CD4-positive, alpha-beta T cell (primary cell): ENCODE measurements at regions of chr3 and their contacts with region 1.

Region 1: DNA sequence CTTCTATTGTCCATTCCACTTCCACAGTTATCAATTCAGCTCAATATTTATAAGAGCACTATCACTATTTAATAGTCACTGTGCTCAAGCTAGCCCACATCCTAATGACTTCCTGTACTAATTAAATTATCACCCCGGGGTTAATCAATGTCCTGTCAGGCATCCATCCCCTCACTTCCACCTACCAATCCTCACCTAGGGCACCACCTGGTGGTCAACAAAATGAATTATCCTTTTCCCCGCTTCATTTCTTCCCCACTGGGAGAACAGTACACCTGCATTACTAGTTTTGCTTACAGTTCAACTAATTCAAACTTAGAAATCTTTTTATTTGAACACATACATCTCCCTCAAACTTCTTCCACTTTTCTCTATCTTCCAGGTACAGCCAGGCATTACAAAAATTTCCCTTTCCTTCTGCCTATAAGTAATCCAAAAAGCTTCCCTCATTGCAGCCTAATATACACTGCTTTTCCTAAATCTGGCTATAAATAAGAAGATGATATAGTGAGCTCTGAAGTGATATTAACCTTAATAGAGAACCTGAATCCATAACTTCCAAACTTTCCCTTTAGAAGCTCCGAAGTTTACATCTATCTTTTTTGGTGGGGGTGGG is 68.5 kb downstream of the TMCC1 start:
- DNase-seq: peak in 12 of 14 experiments; percentile 2 to 76 (median 16)
- ATAC-seq: peak; percentile 62
- H3K4me3 ChIP-seq: no peak overlapping the region
- H3K4me3 Mint-ChIP-seq: no peak overlapping the region
- H3K27ac ChIP-seq: no peak overlapping the region
- H3K27ac Mint-ChIP-seq: no peak overlapping the region
- H3K4me1 ChIP-seq: peaks cover 7% of the 10 kb centered on the region
- H3K4me1 Mint-ChIP-seq: peaks cover 32% of the 10 kb centered on the region
- H3K27me3 ChIP-seq: no peaks in the 10 kb centered on the region
- H3K27me3 Mint-ChIP-seq: no peaks in the 10 kb centered on the region
- CTCF ChIP-seq: peak; percentile 71

Region 2: DNA sequence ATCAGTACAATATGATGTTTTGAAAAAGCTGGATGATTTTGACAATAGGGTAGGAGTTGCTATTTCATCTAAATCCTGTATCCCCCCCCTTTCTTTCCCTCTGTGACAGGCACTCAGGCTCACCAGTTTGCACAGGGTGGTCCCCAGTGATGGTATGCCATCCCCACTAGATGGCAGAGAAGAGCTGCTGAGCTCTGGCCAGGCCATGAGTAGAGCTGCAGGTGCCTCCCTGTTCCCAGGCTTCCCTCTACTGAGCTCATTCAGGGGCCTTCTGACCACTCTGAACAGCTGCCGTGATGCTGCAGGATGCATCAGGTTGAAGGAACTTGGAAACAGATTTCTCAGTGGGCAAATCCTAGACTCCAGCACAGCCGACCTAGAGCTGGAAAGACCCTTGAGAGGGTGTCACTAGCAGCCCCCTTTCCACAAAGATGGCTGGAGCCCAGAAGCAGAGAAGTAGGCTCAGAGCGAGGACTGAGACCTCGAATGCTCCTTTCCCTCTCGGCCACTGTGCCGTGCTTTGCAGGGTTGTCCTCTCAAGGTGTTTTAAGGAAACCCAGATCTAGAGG is 441.7 kb before region 1 on chr3:
- CTCF ChIA-PET with region 1: interaction called, 3 read pairs
- POLR2A ChIA-PET with region 1: no interaction called
- intact Hi-C with region 1: loop called (anchors 2 kb)
- DNase-seq: peak; percentile 11 to 64 (median 30)
- ATAC-seq: peak; percentile 92
- H3K4me3 ChIP-seq: no peak overlapping the region
- H3K4me3 Mint-ChIP-seq: no peak overlapping the region
- H3K27ac ChIP-seq: no peak overlapping the region
- H3K27ac Mint-ChIP-seq: no peak overlapping the region
- H3K4me1 ChIP-seq: no peaks in the 10 kb centered on the region
- H3K4me1 Mint-ChIP-seq: no peaks in the 10 kb centered on the region
- H3K27me3 ChIP-seq: no peaks in the 10 kb centered on the region
- H3K27me3 Mint-ChIP-seq: no peaks in the 10 kb centered on the region
- CTCF ChIP-seq: peak; percentile 68

Region 3: DNA sequence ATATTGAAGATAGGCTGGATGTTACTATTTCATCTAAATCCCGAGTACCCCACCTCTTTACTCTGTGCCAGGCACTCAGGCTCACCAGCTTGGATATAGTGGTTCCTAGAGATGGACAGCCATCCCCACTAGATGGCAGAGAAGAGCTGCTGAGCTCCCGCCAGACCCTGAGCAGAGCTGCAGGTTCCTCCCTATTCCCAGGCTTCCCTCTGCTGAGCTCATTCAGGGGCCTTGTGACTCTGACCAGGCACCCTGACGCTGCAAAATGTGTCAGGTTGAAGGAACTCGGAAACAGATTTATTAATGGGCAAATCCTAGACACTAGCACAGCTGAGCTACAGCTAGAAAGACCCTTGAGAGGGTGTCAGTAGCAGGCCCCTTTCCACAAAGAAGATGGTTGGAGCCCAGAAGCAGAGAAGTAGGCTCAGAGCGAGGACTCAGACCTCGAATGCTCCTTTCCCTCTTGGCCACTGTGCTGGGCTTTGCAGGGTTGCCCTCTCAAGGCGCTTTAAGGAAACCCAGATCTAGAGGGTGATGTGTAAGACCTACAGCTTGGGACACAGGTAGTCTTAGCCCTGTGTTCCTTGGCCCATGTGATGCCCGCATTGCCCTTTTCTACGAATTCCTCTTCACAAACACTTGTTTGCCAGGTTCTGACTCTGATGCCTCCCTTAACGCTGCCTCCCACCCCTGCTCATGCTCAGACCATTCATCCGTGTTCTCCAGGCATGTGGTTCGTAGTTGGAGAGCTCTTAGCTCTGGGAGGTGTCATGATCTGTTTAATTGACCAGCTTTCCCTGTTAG is 334.6 kb before region 1 on chr3:
- CTCF ChIA-PET with region 1: interaction called, 6 read pairs
- POLR2A ChIA-PET with region 1: interaction called, 3 read pairs
- intact Hi-C with region 1: loop called (anchors 1 to 2 kb)
- DNase-seq: peak; percentile 22 to 83 (median 42)
- ATAC-seq: peak; percentile 98
- H3K4me3 ChIP-seq: no peak overlapping the region
- H3K4me3 Mint-ChIP-seq: no peak overlapping the region
- H3K27ac ChIP-seq: no peak overlapping the region
- H3K27ac Mint-ChIP-seq: no peak overlapping the region
- H3K4me1 ChIP-seq: peaks cover 6% of the 10 kb centered on the region
- H3K4me1 Mint-ChIP-seq: no peaks in the 10 kb centered on the region
- H3K27me3 ChIP-seq: no peaks in the 10 kb centered on the region
- H3K27me3 Mint-ChIP-seq: no peaks in the 10 kb centered on the region
- CTCF ChIP-seq: peak; percentile 86

Region 4: DNA sequence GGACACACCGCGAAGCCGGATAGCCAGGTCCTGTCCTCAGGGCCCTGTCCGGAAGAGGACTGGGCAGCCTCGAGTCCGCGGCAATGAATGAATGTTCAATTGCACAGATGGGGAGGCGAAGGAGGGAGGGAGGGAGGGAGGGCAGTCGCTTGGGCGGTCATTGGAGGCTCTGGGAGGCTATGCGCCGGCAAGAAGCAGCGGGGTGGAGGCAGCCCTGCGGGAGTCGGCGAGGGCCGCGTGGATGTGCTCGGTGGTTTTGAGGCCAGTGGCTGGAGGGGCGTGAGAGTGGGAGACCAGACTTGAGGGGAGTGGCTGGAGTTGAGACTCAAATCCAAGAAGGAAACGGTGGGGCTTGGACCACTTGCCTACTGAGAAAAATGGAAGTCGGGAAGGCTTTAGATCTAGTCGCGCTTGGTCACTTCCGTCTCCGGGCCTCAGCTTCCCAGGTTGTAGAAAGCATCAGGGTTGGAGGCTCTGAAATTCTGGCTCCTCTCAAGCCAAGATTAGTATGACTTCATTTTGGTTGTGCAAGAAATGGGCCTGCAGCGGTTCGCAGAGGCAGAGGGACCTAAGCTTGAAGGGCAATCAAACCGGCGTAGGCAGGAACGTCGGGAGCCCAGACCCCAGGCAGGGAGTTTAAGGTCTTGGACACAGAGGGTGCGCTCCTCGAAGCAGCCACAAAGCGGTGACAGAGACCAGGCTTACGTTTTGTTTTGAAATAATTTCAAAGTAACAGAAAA is 197.4 kb before region 1 on chr3:
- CTCF ChIA-PET with region 1: interaction called, 3 read pairs
- POLR2A ChIA-PET with region 1: interaction called, 3 read pairs
- intact Hi-C with region 1: loop called (anchors 1 to 2 kb)
- DNase-seq: peak; percentile 55 to 83 (median 62)
- ATAC-seq: peak; percentile 86
- H3K4me3 ChIP-seq: peak overlapping the region; percentile 66
- H3K4me3 Mint-ChIP-seq: peak overlapping the region; percentile 92
- H3K27ac ChIP-seq: peak overlapping the region in 1 of 2 donors; percentile 27
- H3K27ac Mint-ChIP-seq: peak overlapping the region; percentile 66
- H3K4me1 ChIP-seq: peaks cover 28% of the 10 kb centered on the region
- H3K4me1 Mint-ChIP-seq: peaks cover 17% of the 10 kb centered on the region
- H3K27me3 ChIP-seq: no peaks in the 10 kb centered on the region
- H3K27me3 Mint-ChIP-seq: no peaks in the 10 kb centered on the region
- CTCF ChIP-seq: peak; percentile 70

Region 5: DNA sequence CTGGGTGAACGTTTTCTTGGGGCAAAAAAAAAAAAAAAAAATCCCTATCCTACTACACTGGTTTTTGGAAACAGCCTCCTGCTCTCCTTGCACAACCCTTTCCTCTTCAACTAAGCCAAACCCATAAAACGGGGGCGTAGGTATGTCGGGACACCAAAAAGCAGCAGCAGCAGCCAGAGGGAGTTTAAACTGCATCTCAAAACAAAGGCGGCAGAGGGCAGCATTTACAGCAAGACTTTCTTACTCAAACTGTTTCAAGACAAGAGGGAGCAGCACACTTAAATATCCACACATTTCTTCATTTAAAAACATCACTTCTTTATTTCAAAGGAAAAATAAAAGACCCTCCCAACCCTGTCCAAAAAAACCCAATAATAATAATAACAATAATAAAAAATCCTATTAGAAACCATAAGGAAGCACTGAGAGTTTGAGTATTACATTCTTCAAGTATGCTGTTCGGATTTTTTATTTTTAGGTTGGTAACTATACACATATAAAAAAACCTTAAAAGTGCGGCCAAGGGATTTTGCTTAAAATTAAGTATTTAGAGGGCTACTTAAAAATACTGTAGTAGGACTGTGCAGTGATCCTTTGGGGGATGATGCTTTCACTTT is 174.7 kb before region 1 on chr3:
- CTCF ChIA-PET with region 1: no interaction called
- POLR2A ChIA-PET with region 1: no interaction called
- intact Hi-C with region 1: loop called (anchors 2 kb)
- DNase-seq: peak; percentile 23 to 72 (median 44)
- ATAC-seq: peak; percentile 51
- H3K4me3 ChIP-seq: no peak overlapping the region
- H3K4me3 Mint-ChIP-seq: no peak overlapping the region
- H3K27ac ChIP-seq: no peak overlapping the region
- H3K27ac Mint-ChIP-seq: no peak overlapping the region
- H3K4me1 ChIP-seq: no peaks in the 10 kb centered on the region
- H3K4me1 Mint-ChIP-seq: peaks cover 4% of the 10 kb centered on the region
- H3K27me3 ChIP-seq: no peaks in the 10 kb centered on the region
- H3K27me3 Mint-ChIP-seq: no peaks in the 10 kb centered on the region
- CTCF ChIP-seq: peak; percentile 64